ENCODE measurements at regions of chr9 and their contacts with region 1.

Region 1: DNA sequence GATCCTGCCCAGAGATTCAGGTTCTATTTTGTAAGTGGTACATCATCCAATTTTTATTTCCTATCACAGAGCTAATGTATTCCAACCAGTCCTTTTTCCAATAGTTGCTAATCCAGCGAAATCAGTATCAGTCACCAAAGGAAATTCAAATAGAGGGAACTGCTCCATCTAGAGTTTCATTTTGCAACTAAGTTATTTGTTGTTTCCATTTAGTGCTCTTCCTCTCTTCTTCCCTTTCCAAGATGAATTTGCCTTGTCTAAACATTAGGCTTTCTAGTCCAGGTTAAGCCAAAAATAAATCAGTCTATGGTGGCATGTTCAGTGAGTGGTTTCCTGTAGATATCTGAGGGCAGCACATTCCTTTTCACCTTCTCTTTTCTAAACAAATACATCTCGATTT is 79.8 kb upstream of the SPATA31D4 start:
- DNase-seq: no peak
- H3K4me3 ChIP-seq: no peak overlapping the region
- H3K27ac ChIP-seq: no peak overlapping the region
- H3K4me1 ChIP-seq: peaks cover 0 to 5% (median 3%) of the 10 kb centered on the region in 4 experiments; a peak in 2 of 7 replicates
- H3K27me3 ChIP-seq: no peaks in the 10 kb centered on the region
- CTCF ChIP-seq: peak in 1 of 3 experiments; percentile 21; a peak in 2 of 4 replicates
- EP300 ChIP-seq: no peak
- POLR2A ChIP-seq: no peak
- RAD21 ChIP-seq: peak; percentile 46 to 51

Region 2: DNA sequence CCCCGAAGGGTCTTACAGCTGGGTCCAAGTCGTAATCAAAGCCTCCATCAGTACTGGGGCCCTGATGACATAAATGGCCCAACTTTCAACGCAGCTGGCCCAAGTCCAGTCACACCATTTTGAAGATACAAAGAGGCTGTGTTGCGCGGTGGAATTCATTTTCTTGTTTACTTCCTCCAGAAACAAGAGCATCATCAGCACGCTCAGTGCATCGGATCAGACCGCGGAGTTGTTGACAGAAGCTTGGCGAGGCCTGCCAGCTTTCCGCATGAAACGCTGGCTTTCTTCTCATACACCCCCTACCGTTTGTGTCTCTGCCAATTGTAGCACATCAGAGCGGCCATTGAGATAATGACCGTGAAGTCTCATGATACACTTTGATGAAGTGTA is 22.0 kb before region 1 on chr9:
- CTCF ChIA-PET with region 1: interaction called, 12 read pairs
- POLR2A ChIA-PET with region 1: no interaction called
- DNase-seq: no peak
- H3K4me3 ChIP-seq: no peak overlapping the region
- H3K27ac ChIP-seq: no peak overlapping the region
- H3K4me1 ChIP-seq: peaks cover 0 to 10% (median 3%) of the 10 kb centered on the region in 4 experiments; a peak in 3 of 7 replicates
- H3K27me3 ChIP-seq: no peaks in the 10 kb centered on the region
- CTCF ChIP-seq: no peak
- EP300 ChIP-seq: no peak
- POLR2A ChIP-seq: no peak
- RAD21 ChIP-seq: no peak

Region 3: DNA sequence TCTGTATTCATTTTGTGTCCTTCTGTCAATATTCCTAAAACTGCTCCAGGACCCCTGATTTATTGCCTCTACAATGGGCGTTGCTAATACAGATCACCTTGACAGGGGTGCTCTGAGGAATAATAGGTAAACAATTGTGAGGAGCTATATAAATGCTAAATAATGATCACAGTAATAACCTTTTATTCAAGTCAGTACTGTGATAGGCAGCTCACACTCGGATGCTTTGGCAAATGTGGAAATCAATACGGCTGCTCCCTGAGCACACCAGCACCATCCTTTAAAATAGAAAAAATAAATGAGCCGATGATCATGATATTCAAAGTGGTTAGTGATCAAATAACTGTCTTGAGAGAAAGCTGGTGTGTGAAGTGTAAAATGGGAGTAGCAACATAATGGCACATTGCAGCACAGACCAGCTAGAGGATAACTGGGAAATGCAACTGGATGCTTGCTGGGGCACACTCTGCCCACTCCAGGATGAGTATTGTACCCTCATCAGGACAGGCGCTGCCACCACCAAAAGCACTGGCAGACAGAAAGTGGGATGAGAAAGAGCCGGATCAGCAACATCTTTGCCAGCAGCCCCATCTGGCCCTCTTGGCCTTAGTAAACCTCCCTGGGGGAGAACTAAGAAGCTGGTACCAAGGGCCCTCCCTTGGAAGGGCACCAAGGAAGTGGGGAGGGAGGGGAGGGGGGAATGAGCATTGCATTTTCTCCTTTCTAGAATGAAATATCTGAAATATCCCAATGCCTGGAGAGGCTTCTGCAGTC is 10.4 kb after region 1 on chr9:
- CTCF ChIA-PET with region 1: interaction called, 14 read pairs
- POLR2A ChIA-PET with region 1: no interaction called
- DNase-seq: no peak
- H3K4me3 ChIP-seq: no peak overlapping the region
- H3K27ac ChIP-seq: no peak overlapping the region
- H3K4me1 ChIP-seq: no peaks in the 10 kb centered on the region
- H3K27me3 ChIP-seq: no peaks in the 10 kb centered on the region
- CTCF ChIP-seq: no peak
- EP300 ChIP-seq: no peak
- POLR2A ChIP-seq: no peak
- RAD21 ChIP-seq: no peak

Measured in H1 (cell line).